Activated CD4-positive, alpha-beta T cell treated with anti-CD3 and anti-CD28 coated beads for 36 hours (primary cell): ENCODE measurements at regions of chr1 and their contacts with region 1.

Region 1: DNA sequence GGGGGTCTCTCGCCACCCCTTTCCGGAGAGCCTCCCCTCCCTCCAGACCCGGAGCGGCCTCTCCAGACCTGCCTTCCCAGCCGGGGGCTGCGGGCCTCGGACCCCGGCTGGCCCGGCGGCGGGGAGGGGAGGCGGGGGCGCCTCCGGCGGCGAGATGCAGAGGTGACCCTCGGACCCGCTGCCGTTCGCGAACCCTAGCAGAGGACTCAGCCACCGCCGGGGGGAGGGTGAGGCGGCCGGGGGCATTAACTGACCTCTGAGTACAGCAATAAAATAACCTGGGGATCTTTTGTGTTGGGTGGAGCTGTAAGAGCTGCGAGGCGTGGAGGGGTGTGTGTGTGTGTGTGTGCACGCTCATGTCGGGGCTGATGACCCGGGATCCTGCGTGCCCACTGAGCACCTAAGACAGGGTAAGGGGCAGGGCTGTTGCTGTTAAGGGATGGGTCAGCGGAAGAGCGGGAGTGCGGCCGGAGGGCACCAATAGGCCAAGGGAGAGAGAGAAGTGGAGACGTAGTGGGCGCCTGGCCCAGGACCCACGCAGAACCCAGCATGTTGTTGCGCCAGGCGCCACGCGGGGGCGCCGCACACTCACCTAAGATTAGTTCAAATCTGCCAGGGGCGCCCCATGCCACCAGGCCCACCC is 6.3 kb downstream of the HAPLN2 start:
- DNase-seq: peak; percentile 83
- ATAC-seq: peak; percentile 65
- H3K4me3 Mint-ChIP-seq: peak overlapping the region; percentile 53
- H3K27ac Mint-ChIP-seq: no peak overlapping the region
- H3K4me1 Mint-ChIP-seq: peaks cover 6% of the 10 kb centered on the region
- H3K27me3 Mint-ChIP-seq: peaks cover 41% of the 10 kb centered on the region

Region 2: GRCh38 chr1:156643778-156644092 is 18.2 kb after region 1 on chr1:
- CTCF ChIA-PET with region 1: interaction called, 13 read pairs
- POLR2A ChIA-PET with region 1: no interaction called
- intact Hi-C with region 1: no loop called
- DNase-seq: peak; percentile 56
- ATAC-seq: peak; percentile 81
- H3K4me3 Mint-ChIP-seq: no peak overlapping the region
- H3K27ac Mint-ChIP-seq: no peak overlapping the region
- H3K4me1 Mint-ChIP-seq: peaks cover 22% of the 10 kb centered on the region
- H3K27me3 Mint-ChIP-seq: peaks cover 79% of the 10 kb centered on the region

Region 3: DNA sequence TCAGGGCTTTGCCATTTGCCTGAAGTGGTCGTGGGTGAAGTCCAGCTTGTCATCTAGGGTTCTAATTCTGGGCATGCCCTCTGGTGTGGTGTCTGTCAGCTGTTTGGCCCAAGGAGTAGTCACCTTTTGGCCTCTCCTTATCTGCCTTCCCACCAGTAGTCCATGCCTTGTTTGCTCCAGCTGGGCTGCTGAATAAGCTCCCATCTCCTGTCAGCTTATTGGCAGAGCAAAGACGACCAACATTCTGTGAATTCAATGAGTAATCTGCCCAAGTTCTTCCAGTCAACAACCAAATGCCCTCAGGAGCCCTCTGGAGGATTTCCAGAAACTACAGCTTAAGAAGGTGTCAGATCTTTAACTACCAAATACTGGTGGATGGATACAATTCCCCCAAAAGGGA is 23.4 kb after region 1 on chr1:
- CTCF ChIA-PET with region 1: interaction called, 13 read pairs
- POLR2A ChIA-PET with region 1: no interaction called
- intact Hi-C with region 1: no loop called
- DNase-seq: no peak
- ATAC-seq: no peak
- H3K4me3 Mint-ChIP-seq: no peak overlapping the region
- H3K27ac Mint-ChIP-seq: no peak overlapping the region
- H3K4me1 Mint-ChIP-seq: no peaks in the 10 kb centered on the region
- H3K27me3 Mint-ChIP-seq: peaks cover 63% of the 10 kb centered on the region

Region 4: GRCh38 chr1:156677616-156678596 is 52.3 kb after region 1 on chr1:
- CTCF ChIA-PET with region 1: interaction called, 23 read pairs
- POLR2A ChIA-PET with region 1: no interaction called
- intact Hi-C with region 1: loop called (anchors 1 kb)
- DNase-seq: peak; percentile 53
- ATAC-seq: peak; percentile 44
- H3K4me3 Mint-ChIP-seq: no peak overlapping the region
- H3K27ac Mint-ChIP-seq: no peak overlapping the region
- H3K4me1 Mint-ChIP-seq: peaks cover 11% of the 10 kb centered on the region
- H3K27me3 Mint-ChIP-seq: peaks cover 43% of the 10 kb centered on the region

Region 5: GRCh38 chr1:156705918-156706656 is 80.5 kb after region 1 on chr1:
- CTCF ChIA-PET with region 1: interaction called, 16 read pairs
- POLR2A ChIA-PET with region 1: no interaction called
- intact Hi-C with region 1: loop called (anchors 1 to 5 kb)
- DNase-seq: peak; percentile 88
- ATAC-seq: peak; percentile 80
- H3K4me3 Mint-ChIP-seq: peak overlapping the region; percentile 71
- H3K27ac Mint-ChIP-seq: peak overlapping the region; percentile 58
- H3K4me1 Mint-ChIP-seq: peaks cover 24% of the 10 kb centered on the region
- H3K27me3 Mint-ChIP-seq: peaks cover 20% of the 10 kb centered on the region